ENCODE measurements at regions of chr1 and their contacts with region 1.

Region 1: GRCh38 chr1:245156081-245156735 is 1.4 kb downstream of the KIF26B start:
- DNase-seq: peak; percentile 59 to 68 (median 67)
- H3K4me3 ChIP-seq: peak overlapping the region in 1 of 2 donors; percentile 58
- H3K4me3 Mint-ChIP-seq: peak overlapping the region; percentile 69 to 90 (median 80)
- H3K27ac ChIP-seq: no peak overlapping the region
- H3K27ac Mint-ChIP-seq: no peak overlapping the region
- H3K4me1 ChIP-seq: peaks cover 35% of the 10 kb centered on the region
- H3K4me1 Mint-ChIP-seq: peaks cover 15 to 35% (median 25%) of the 10 kb centered on the region in 4 donors
- H3K27me3 ChIP-seq: peaks cover 28% of the 10 kb centered on the region
- H3K27me3 Mint-ChIP-seq: peaks cover 48 to 55% of the 10 kb centered on the region in 2 donors

Region 2: DNA sequence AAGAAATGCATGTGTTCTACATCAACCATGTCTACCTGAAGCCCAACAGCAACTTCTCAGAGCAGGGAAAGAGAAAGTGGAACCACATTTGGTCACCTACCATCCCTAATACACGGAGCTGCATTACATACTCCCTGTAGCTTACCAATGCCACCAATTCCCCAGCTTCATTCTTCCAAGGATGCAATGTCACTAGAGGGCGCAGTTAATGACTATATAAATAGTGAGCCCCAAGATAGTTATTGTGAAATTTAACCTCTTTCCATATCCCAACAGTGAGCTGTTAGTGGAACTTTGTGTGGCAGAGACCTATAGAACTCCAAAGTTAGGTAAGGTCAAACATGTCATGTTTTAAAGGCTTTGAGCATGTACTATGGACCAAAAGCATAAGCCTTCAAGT is 732.6 kb after region 1 on chr1:
- CTCF ChIA-PET with region 1: interaction called, 4 read pairs
- POLR2A ChIA-PET with region 1: no interaction called
- intact Hi-C with region 1: loop called (anchors 10 kb)
- DNase-seq: peak in 2 of 5 donors; percentile 17 to 19
- H3K4me3 ChIP-seq: no peak overlapping the region
- H3K4me3 Mint-ChIP-seq: no peak overlapping the region
- H3K27ac ChIP-seq: no peak overlapping the region
- H3K27ac Mint-ChIP-seq: no peak overlapping the region
- H3K4me1 ChIP-seq: no peaks in the 10 kb centered on the region
- H3K4me1 Mint-ChIP-seq: peaks cover 0 to 7% (median 4%) of the 10 kb centered on the region in 4 donors
- H3K27me3 ChIP-seq: no peaks in the 10 kb centered on the region
- H3K27me3 Mint-ChIP-seq: no peaks in the 10 kb centered on the region

Region 3: GRCh38 chr1:246002725-246003441 is 846.7 kb after region 1 on chr1:
- CTCF ChIA-PET with region 1: interaction called, 17 read pairs
- POLR2A ChIA-PET with region 1: no interaction called
- intact Hi-C with region 1: no loop called
- DNase-seq: peak; percentile 68 to 77 (median 70)
- H3K4me3 ChIP-seq: no peak overlapping the region
- H3K4me3 Mint-ChIP-seq: no peak overlapping the region
- H3K27ac ChIP-seq: no peak overlapping the region
- H3K27ac Mint-ChIP-seq: no peak overlapping the region
- H3K4me1 ChIP-seq: no peaks in the 10 kb centered on the region
- H3K4me1 Mint-ChIP-seq: no peaks in the 10 kb centered on the region
- H3K27me3 ChIP-seq: no peaks in the 10 kb centered on the region
- H3K27me3 Mint-ChIP-seq: no peaks in the 10 kb centered on the region

Region 4: DNA sequence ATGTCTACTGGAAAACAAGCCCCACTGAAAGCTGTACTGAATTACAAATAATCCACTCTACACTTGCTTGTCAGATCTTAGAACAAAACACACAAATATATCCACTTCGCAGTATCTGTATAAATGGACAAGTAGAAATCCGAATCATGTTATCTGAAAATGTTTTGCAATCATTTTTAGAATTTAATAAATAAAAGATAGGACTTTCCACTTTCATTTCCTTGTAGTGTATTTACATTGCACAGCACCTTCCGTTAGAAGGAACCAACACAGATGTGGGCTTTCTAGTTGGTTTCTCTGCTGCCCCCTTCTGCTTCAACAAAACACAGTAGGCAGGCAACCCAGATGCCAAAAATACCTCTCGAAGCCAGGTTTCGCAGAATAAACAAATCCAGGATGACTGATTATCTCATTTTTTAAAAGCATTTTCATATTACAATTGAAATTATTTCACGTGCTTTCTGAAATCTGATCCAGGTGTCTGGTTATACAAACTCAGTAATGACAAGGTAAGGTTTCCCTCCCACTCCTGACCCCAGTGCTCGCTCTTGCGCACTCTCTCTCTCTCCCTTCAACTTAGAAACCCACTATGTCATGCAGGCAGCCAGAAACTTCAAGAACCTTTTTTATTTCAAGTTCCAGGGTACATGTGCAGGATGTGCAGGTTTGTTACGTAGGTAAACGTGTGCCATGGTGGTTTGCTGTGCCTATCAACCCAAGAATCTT is 961.0 kb after region 1 on chr1:
- CTCF ChIA-PET with region 1: interaction called, 3 read pairs
- POLR2A ChIA-PET with region 1: no interaction called
- intact Hi-C with region 1: loop called (anchors 5 kb)
- DNase-seq: peak; percentile 71 to 83 (median 76)
- H3K4me3 ChIP-seq: no peak overlapping the region
- H3K4me3 Mint-ChIP-seq: peak overlapping the region; percentile 49 to 90 (median 72)
- H3K27ac ChIP-seq: peak overlapping the region; percentile 19
- H3K27ac Mint-ChIP-seq: peak overlapping the region; percentile 70 to 90 (median 86)
- H3K4me1 ChIP-seq: peaks cover 23% of the 10 kb centered on the region
- H3K4me1 Mint-ChIP-seq: peaks cover 6 to 24% (median 10%) of the 10 kb centered on the region in 4 donors
- H3K27me3 ChIP-seq: no peaks in the 10 kb centered on the region
- H3K27me3 Mint-ChIP-seq: no peaks in the 10 kb centered on the region

Region 5: DNA sequence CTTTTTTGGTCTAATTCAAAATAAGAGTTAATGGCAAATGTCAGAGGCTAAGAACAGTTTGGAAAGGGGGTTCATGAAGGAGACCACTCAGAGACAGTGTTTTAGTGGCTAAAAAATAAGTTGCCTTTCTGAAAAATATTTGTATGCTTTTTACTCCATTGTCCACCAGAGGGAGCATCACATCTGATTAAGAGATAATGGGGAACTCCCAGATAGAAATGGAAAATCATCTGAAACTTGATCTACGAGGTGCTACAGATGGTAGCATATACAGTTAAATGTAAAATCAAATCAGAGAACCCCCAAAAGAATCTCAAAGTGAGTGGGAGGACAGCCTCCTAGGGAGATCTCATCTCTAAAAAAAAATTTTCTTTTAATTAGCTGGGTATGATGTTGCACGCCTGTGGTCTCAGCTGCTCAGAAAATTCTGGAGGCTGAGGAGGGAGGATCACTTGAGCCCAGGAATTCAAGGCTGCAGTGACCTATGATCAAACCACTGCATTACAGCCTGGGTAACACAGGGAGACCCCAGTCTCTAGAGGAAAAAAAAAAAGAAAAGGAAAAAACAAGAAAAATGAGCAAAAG is 1341.2 kb after region 1 on chr1:
- CTCF ChIA-PET with region 1: interaction called, 8 read pairs
- POLR2A ChIA-PET with region 1: no interaction called
- intact Hi-C with region 1: loop called (anchors 5 kb)
- DNase-seq: peak in 4 of 5 donors; percentile 59 to 71 (median 68)
- H3K4me3 ChIP-seq: no peak overlapping the region
- H3K4me3 Mint-ChIP-seq: no peak overlapping the region
- H3K27ac ChIP-seq: no peak overlapping the region
- H3K27ac Mint-ChIP-seq: peak overlapping the region in 3 of 7 donors; percentile 26 to 79 (median 60)
- H3K4me1 ChIP-seq: no peaks in the 10 kb centered on the region
- H3K4me1 Mint-ChIP-seq: peaks cover 13 to 27% (median 15%) of the 10 kb centered on the region in 4 donors
- H3K27me3 ChIP-seq: no peaks in the 10 kb centered on the region
- H3K27me3 Mint-ChIP-seq: no peaks in the 10 kb centered on the region

Region 6: GRCh38 chr1:246699095-246699735 is 1543.0 kb after region 1 on chr1:
- CTCF ChIA-PET with region 1: no interaction called
- POLR2A ChIA-PET with region 1: no interaction called
- intact Hi-C with region 1: loop called (anchors 2 kb)
- DNase-seq: peak; percentile 74 to 80 (median 77)
- H3K4me3 ChIP-seq: peak overlapping the region in 1 of 2 donors; percentile 4
- H3K4me3 Mint-ChIP-seq: peak overlapping the region; percentile 38 to 85 (median 74)
- H3K27ac ChIP-seq: no peak overlapping the region
- H3K27ac Mint-ChIP-seq: peak overlapping the region in 5 of 7 donors; percentile 11 to 53 (median 31)
- H3K4me1 ChIP-seq: peaks cover 10% of the 10 kb centered on the region
- H3K4me1 Mint-ChIP-seq: peaks cover 3 to 13% (median 6%) of the 10 kb centered on the region in 4 donors
- H3K27me3 ChIP-seq: no peaks in the 10 kb centered on the region
- H3K27me3 Mint-ChIP-seq: no peaks in the 10 kb centered on the region

Region 7: DNA sequence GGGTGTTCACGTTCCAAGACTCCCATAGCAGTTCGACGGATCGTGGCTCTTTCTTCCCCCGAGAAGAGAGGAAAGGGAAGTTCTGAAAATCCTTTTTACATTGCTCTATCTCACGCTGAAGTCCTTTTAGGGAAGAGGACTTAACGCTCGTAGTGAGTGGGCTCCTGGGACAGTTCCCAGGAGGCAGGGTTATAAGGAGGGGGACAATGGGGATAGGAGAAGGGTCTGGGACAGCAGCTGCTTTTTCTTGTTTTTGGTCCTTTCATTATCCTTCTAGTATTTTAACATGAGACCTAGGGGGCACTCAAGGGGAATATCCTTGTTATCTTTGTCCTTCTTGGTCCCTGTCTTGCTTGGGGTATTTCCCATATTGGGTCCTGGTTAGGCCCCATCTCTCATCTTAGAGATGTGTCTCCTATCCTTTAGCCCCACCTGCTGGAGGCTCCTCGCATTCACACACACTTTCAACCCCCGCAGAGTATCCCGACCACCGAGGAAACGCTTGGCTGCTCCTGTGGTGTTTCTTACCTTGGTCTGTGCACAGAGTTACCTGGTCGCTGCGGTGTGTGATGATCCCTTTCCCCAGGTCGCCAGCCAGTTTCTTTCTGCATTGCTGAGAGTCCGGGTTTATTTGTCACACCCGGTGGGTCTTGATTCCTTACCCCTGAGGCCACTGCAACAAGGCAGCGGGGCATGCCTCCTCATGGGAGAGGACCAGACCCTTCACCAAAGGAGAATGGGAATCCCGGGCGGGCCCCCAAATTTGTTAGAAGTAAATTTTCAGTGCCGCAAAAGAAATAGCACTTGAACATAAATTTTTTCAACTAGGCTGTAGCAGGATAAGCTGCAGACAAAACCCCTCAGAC is 1597.7 kb after region 1 on chr1:
- CTCF ChIA-PET with region 1: no interaction called
- POLR2A ChIA-PET with region 1: no interaction called
- intact Hi-C with region 1: loop called (anchors 10 kb)
- DNase-seq: peak; percentile 27 to 49 (median 37)
- H3K4me3 ChIP-seq: no peak overlapping the region
- H3K4me3 Mint-ChIP-seq: no peak overlapping the region
- H3K27ac ChIP-seq: no peak overlapping the region
- H3K27ac Mint-ChIP-seq: peak overlapping the region in 1 of 7 donors; percentile 25
- H3K4me1 ChIP-seq: no peaks in the 10 kb centered on the region
- H3K4me1 Mint-ChIP-seq: no peaks in the 10 kb centered on the region
- H3K27me3 ChIP-seq: no peaks in the 10 kb centered on the region
- H3K27me3 Mint-ChIP-seq: no peaks in the 10 kb centered on the region

Measured in CD4-positive, alpha-beta memory T cell (primary cell).